Naive thymus-derived CD8-positive, alpha-beta T cell (primary cell): ENCODE measurements at regions of chr12 and their contacts with region 1.

Region 1: GRCh38 chr12:104137913-104138796 is at the start of gene NFYB:
- DNase-seq: peak; percentile 85 to 96 (median 92)
- ATAC-seq: peak; percentile 96
- H3K4me3 Mint-ChIP-seq: peak within 1 kb of the TSS; percentile 72 to 94 (median 90)
- H3K27ac Mint-ChIP-seq: peak within 1 kb of the TSS; percentile 51 to 96 (median 92)
- H3K4me1 Mint-ChIP-seq: peaks cover 4 to 15% (median 7%) of the 10 kb centered on the region in 4 donors
- H3K27me3 Mint-ChIP-seq: no peaks in the 10 kb centered on the region
- polyA plus RNA-seq, gene NFYB: 26.0 to 38.8 (median 30.3) TPM

Region 2: GRCh38 chr12:103965590-103966504 is 172.3 kb before region 1 on chr12 and contains the start of gene TDG:
- POLR2A ChIA-PET with region 1: interaction called, 20 read pairs
- DNase-seq: peak; percentile 86 to 99 (median 97)
- ATAC-seq: peak; percentile 93 to 94
- H3K4me3 Mint-ChIP-seq: peak within 1 kb of the TSS; percentile 96 to 99 (median 98)
- H3K27ac Mint-ChIP-seq: peak within 1 kb of the TSS; percentile 93 to 99 (median 99)
- H3K4me1 Mint-ChIP-seq: peaks cover 24 to 64% (median 60%) of the 10 kb centered on the region in 4 donors
- H3K27me3 Mint-ChIP-seq: no peaks in the 10 kb centered on the region
- polyA plus RNA-seq, gene TDG: 19.0 to 21.4 (median 20.0) TPM

Region 3: DNA sequence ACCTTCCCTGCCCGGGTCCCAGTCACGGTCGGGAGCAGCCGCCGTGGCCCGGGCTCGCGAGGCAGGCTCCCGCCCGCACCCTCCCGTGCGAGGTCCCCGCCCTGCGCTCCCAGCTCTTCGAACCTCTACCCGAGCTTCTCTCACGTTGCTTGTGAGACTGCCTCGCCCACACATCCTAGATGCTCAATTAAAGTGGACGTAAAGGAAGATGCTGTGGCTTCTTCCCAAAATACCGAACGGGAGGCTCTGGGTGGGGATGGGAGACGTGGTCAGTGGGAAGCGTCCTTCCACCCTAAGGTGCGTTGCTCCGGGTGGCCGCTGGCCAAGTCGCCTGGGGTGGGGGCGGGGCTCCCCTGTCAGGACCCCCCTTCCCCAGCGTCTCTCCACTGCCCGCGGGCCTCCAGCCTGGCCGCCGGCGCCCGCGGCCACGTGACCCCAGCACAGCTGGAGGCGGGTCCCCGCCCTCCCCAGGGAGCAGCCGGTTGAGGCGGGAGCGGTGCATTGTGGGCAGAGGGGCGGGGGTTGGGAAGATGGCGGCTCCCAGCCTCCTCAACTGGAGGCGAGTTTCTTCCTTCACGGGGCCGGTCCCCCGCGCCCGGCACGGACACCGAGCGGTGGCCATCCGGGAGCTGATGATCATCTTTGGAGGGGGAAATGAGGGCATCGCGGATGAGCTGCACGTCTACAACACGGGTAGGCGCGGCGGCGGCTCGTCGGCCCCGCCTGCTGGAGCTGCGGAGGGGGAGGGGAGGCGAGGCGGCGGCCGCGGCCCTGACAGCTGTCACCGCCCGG is 73.9 kb before region 1 on chr12 and contains the start of gene HCFC2:
- POLR2A ChIA-PET with region 1: interaction called, 12 read pairs
- DNase-seq: peak; percentile 76 to 91 (median 82)
- ATAC-seq: peak; percentile 93
- H3K4me3 Mint-ChIP-seq: peak within 1 kb of the TSS; percentile 90 to 97 (median 94)
- H3K27ac Mint-ChIP-seq: peak within 1 kb of the TSS; percentile 74 to 97 (median 93)
- H3K4me1 Mint-ChIP-seq: peaks cover 10 to 24% (median 18%) of the 10 kb centered on the region in 4 donors
- H3K27me3 Mint-ChIP-seq: peaks cover 0 to 12% (median 8%) of the 10 kb centered on the region in 5 donors
- polyA plus RNA-seq, gene HCFC2: 4.1 to 6.9 (median 6.3) TPM

Region 4: GRCh38 chr12:104150416-104150815 is 12.3 kb after region 1 on chr12:
- POLR2A ChIA-PET with region 1: no interaction called
- DNase-seq: no peak
- ATAC-seq: no peak
- H3K4me3 Mint-ChIP-seq: no peak overlapping the region
- H3K27ac Mint-ChIP-seq: no peak overlapping the region
- H3K4me1 Mint-ChIP-seq: peaks cover 7 to 11% (median 9%) of the 10 kb centered on the region in 4 donors
- H3K27me3 Mint-ChIP-seq: peaks cover 0 to 6% (median 4%) of the 10 kb centered on the region in 5 donors

Region 5: DNA sequence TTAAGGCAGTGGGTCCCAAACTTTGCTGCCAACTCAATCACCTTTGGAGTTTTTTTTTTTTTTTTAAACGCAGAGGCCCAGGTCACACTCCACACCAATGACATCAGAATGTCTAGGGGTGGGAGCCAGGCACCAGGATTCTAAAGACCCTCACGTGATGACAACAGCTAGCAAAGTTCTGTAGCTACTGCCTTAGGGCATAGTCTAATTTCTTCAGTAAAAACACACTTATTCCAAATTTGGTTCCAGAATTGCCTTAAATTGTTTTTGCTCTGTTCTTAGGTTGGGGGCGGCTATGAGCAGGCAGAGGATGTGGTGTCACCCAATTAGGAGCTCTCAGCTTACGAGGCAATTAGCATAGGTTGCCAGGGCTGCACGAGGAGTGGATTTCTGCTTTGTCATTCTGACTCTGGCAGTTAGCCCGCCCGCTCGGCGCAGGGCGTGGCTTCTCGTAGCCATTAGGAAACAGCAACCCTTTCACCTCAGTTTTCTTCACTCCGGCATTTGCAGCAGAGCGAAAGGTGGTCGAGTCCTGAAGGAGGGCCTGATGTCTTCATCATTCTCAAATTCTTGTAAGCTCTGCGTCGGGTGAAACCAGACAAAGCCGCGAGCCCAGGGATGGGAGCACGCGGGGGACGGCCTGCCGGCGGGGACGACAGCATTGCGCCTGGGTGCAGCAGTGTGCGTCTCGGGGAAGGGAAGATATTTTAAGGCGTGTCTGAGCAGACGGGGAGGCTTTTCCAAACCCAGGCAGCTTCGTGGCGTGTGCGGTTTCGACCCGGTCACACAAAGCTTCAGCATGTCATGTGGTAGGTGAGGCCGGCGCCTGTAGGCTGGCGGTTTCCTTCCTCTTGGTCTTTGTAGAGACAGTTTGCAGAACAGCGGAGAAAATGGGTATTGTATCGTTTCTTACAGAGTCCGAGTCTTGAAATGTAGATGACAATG is 148.7 kb after region 1 on chr12:
- POLR2A ChIA-PET with region 1: interaction called, 14 read pairs
- DNase-seq: peak; percentile 72 to 93 (median 86)
- ATAC-seq: peak; percentile 86 to 88
- H3K4me3 Mint-ChIP-seq: peak overlapping the region; percentile 94 to 99 (median 98)
- H3K27ac Mint-ChIP-seq: peak overlapping the region; percentile 87 to 96 (median 95)
- H3K4me1 Mint-ChIP-seq: peaks cover 17 to 40% (median 32%) of the 10 kb centered on the region in 4 donors
- H3K27me3 Mint-ChIP-seq: peaks cover 0 to 3% (median 0%) of the 10 kb centered on the region in 5 donors

Region 6: DNA sequence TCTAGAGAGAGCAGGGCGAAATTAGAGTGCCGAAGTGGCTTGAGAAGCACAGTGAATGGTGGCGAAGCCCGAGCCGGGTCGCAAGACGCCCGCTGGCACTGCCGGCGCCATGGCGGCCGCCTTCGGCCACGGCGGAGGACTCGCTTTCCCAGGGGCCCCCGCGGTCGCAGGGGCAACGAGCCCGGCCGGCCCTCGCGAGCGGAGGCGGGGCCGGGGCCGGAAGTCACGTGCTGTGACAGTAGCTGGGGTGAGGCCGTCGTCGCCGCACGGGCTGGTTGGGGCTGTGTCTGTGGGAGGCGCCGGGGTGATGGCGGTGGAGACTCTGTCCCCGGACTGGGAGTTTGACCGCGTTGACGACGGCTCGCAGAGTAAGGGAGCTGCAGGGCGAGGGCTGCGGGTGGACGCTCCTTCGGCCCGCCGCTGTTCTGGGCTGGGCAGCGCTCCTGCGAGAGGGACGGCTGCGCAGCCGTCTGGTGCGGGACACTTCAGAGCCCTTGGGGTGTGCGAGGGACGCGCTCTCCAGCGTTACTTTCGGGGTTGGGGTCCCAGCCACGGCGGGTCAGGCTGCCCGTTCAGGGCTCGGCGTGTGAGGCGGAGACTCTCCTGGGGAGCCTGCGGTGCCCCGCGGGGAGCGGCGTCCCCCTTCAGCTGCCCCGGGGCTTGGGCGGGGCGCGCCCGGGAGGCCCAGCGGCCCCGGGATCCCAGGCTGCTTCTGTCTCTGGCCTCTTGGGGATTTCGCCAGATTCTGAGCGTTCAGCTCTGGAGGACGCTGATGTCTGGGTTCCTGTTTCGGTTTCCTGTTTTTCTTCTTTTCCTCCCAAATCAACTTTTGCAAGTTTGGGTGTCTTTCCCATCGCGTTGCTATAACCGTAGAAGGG is 969.6 kb after region 1 on chr12 and contains the start of gene WASHC4:
- POLR2A ChIA-PET with region 1: interaction called, 13 read pairs
- DNase-seq: peak; percentile 86 to 93 (median 90)
- ATAC-seq: peak; percentile 95 to 97
- H3K4me3 Mint-ChIP-seq: peak within 1 kb of the TSS; percentile 91 to 98 (median 98)
- H3K27ac Mint-ChIP-seq: peak within 1 kb of the TSS; percentile 90 to 98 (median 96)
- H3K4me1 Mint-ChIP-seq: peaks cover 19 to 54% (median 34%) of the 10 kb centered on the region in 4 donors
- H3K27me3 Mint-ChIP-seq: peaks cover 4 to 21% (median 12%) of the 10 kb centered on the region in 5 donors
- polyA plus RNA-seq, gene WASHC4: 25.5 to 30.3 (median 29.0) TPM